ENCODE measurements at regions of chr7 and their contacts with region 1.

Region 1: GRCh38 chr7:151705636-151706276 is 171.2 kb downstream of the PRKAG2 start:
- DNase-seq: peak in 6 of 14 experiments; percentile 6 to 44 (median 22)
- ATAC-seq: no peak
- H3K4me3 ChIP-seq: no peak overlapping the region
- H3K4me3 Mint-ChIP-seq: no peak overlapping the region
- H3K27ac ChIP-seq: no peak overlapping the region
- H3K27ac Mint-ChIP-seq: no peak overlapping the region
- H3K4me1 ChIP-seq: peaks cover 7% of the 10 kb centered on the region
- H3K4me1 Mint-ChIP-seq: peaks cover 5% of the 10 kb centered on the region
- H3K27me3 ChIP-seq: no peaks in the 10 kb centered on the region
- H3K27me3 Mint-ChIP-seq: no peaks in the 10 kb centered on the region
- CTCF ChIP-seq: no peak

Region 2: DNA sequence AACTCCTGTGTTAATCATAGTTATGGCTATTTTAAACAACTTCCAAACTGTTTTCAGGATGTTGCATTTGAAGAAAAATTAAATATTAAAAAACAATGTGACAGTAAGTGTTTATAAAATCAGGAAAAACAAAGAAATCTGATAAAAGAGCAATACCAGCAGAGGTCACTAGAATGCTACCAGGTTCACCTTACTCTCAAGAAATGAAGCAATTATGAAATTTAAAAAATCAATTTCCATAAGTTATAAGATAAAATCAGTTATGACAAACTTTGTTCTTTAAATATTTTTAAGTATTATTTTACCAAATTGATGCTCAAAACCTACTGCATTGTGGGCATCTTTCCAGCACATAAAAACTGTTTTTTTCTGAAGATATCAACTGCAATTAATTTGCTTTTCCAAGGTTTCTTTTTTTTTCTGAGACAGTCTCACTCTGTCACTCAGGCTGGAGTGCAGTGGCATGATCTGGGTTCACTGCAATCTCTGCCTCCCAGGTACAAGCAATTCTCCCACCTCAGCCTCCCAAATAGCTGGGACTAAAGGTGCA is 135.3 kb before region 1 on chr7:
- CTCF ChIA-PET with region 1: no interaction called
- POLR2A ChIA-PET with region 1: no interaction called
- intact Hi-C with region 1: loop called in 1 of 2 experiments (anchors 1 kb)
- DNase-seq: peak in 2 of 14 experiments; percentile 24 to 32
- ATAC-seq: no peak
- H3K4me3 ChIP-seq: no peak overlapping the region
- H3K4me3 Mint-ChIP-seq: no peak overlapping the region
- H3K27ac ChIP-seq: no peak overlapping the region
- H3K27ac Mint-ChIP-seq: no peak overlapping the region
- H3K4me1 ChIP-seq: no peaks in the 10 kb centered on the region
- H3K4me1 Mint-ChIP-seq: no peaks in the 10 kb centered on the region
- H3K27me3 ChIP-seq: no peaks in the 10 kb centered on the region
- H3K27me3 Mint-ChIP-seq: no peaks in the 10 kb centered on the region
- CTCF ChIP-seq: peak; percentile 49

Measured in CD4-positive, alpha-beta T cell (primary cell).